Gastrocnemius medialis (tissue), 4 donors: ENCODE measurements at regions of chr2 and their contacts with region 1.

Region 1: DNA sequence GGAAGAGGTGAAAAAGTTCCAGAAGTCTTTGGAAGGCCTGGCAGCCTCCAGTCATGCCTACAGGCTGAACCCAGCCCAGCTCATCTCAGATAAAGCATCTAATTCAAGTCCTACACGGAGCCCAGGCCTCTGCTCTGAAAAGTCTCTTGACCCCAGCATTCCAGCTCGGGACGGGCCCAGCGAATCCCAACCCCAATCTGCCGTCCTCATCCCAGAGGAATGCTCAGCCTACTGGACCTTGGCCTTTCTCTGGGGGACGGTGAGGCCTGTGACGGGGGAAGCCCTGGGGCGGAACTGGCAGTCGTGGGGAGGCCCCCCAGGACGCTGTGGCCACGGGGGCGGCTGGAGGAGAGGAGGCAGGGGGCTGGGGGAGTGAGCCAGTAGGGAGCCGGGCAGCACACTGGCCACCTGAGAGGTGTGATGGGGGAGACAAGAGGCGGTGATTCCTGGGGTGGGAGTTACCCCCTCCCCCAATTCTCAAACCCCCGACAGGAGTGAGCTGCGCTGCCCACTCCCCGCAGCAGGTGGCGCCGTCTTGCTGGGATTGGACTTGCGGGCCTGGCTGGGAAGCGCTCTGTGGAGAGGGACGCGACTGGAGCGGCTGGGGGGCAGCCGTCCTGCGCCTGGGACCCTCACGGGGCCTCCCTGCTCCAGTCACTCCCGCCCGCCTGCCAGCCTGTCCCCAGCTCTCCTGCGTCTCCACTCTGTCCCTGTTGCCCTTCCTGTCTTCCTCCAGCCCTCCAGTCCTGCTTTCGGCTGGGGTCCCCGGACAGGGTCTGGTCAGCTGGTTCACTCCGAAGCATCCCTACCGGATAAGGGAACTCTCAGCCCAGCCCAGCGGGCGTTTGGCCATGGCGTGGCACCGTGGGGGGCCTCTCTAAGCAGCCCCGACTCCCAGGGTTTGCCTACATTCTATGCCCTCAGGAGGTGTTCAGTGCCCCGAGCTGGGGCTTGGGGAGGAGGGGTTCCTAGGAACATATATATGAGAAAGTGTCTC is 182.6 kb upstream of the HAAO start:
- DNase-seq: peak; percentile 63 to 65
- ATAC-seq: peak; percentile 81 to 82
- H3K4me3 ChIP-seq: peak overlapping the region; percentile 41 to 60 (median 48)
- H3K27ac ChIP-seq: peak overlapping the region in 3 of 4 donors; percentile 19 to 63 (median 54)
- H3K4me1 ChIP-seq: peaks cover 9 to 13% of the 10 kb centered on the region in 2 donors
- H3K27me3 ChIP-seq: no peaks in the 10 kb centered on the region
- CTCF ChIP-seq: peak; percentile 93 to 95 (median 94)
- POLR2A ChIP-seq: no peak

Region 2: DNA sequence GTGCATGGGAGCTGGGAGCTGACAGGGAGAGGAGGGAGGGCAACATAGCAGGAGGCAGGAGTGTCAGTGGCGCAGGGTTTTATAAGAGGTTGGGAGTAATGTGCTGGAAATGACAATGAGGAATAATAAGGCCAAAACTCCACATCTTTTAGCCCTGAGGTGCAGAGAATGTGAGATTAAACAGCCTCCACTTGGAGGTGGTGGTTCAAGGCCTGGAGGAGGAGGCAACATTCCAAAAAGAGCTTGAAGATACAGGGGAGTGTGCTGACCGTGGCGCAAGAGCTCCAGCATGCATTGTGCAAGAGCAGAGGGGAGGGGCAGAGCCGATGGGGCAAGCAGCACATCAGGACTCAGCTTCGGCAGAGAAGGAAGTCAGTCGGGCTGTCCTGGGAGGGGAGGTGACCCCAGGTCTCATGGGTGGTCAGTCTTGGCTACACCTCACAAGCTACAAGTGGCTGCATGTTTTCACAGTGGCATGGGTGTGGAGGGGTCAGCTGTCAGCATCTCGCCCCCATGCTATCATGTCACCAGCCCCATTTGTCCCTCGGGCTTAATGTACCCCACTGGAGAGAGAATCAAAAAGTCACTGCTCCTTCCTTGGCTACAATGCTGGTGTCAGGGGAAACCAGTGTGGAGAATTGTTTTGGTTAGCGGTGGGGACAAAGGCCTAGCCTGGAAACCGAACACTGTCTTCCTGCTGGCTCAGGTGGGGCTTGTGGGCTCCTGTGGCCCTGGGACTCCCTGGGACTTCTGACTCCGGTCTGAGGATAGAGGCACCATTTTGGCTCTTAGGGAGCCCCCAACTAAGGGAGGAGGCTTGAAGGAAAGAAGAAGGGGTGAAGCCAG is 43.4 kb after region 1 on chr2:
- in situ Hi-C with region 1: loop called in 1 of 4 experiments (anchors 5 kb)
- intact Hi-C with region 1: loop called (anchors 2 kb)
- DNase-seq: peak; percentile 70 to 89
- ATAC-seq: peak; percentile 80 to 92
- H3K4me3 ChIP-seq: no peak overlapping the region
- H3K27ac ChIP-seq: peak overlapping the region; percentile 51 to 67 (median 60)
- H3K4me1 ChIP-seq: peaks cover 0 to 6% of the 10 kb centered on the region in 2 donors
- H3K27me3 ChIP-seq: no peaks in the 10 kb centered on the region
- CTCF ChIP-seq: no peak
- POLR2A ChIP-seq: no peak

Region 3: GRCh38 chr2:43024515-43025011 is 49.5 kb after region 1 on chr2:
- in situ Hi-C with region 1: loop called in 1 of 4 experiments (anchors 5 kb)
- intact Hi-C with region 1: loop called (anchors 2 kb)
- DNase-seq: peak; percentile 27 to 57
- ATAC-seq: peak; percentile 43 to 54
- H3K4me3 ChIP-seq: no peak overlapping the region
- H3K27ac ChIP-seq: no peak overlapping the region
- H3K4me1 ChIP-seq: peaks cover 3 to 7% of the 10 kb centered on the region in 2 donors
- H3K27me3 ChIP-seq: no peaks in the 10 kb centered on the region
- CTCF ChIP-seq: peak; percentile 57 to 90 (median 84)
- POLR2A ChIP-seq: no peak

Region 4: GRCh38 chr2:43131024-43131889 is 156.2 kb after region 1 on chr2:
- in situ Hi-C with region 1: no loop called
- intact Hi-C with region 1: loop called (anchors 5 kb)
- DNase-seq: peak; percentile 92 to 95
- ATAC-seq: peak; percentile 82 to 84
- H3K4me3 ChIP-seq: no peak overlapping the region
- H3K27ac ChIP-seq: peak overlapping the region; percentile 36 to 88 (median 80)
- H3K4me1 ChIP-seq: peaks cover 16 to 28% of the 10 kb centered on the region in 2 donors
- H3K27me3 ChIP-seq: no peaks in the 10 kb centered on the region
- CTCF ChIP-seq: peak; percentile 12 to 55 (median 47)
- POLR2A ChIP-seq: peak in 1 of 2 donors; percentile 27